Adrenal gland (tissue), 19 donors: ENCODE measurements at regions of chr4 and their contacts with region 1.

Region 1: DNA sequence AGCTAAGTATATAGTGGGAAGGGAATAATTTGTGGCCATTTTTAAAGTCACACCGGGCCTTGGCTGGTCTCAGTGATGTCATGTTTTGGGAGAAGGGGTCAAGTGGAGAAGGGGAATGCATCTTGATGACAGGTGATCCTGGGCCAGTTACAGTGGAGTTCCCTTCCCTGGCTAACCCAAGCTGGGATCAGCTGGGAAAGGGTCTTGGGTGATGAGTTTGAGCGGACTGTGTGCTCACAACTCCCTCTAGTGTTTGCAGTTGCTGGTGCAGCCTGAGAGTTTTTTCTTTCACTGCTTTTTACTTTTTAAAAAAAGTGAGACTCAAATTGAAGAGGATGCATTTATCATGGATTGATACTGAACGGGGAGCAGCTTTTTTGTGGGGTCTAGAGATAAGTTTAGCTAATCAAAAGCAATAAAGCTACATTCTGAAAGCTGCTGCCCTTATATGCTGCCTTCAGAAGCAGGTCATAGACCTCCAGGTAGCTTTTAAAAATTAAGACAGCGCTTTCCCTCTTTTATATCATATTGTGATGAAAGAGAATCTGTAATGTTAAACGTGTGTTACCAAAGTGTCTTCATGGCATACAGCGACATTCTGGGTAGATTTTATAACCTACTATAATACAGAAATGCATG is 164.7 kb downstream of the DCLK2 start:
- DNase-seq: peak in 4 of 7 donors; percentile 29 to 61 (median 49)
- H3K4me3 ChIP-seq: no peak overlapping the region
- H3K27ac ChIP-seq: no peak overlapping the region
- H3K4me1 ChIP-seq: no peaks in the 10 kb centered on the region
- H3K27me3 ChIP-seq: no peaks in the 10 kb centered on the region
- CTCF ChIP-seq: peak; percentile 60 to 92 (median 84)
- POLR2A ChIP-seq: no peak

Region 2: DNA sequence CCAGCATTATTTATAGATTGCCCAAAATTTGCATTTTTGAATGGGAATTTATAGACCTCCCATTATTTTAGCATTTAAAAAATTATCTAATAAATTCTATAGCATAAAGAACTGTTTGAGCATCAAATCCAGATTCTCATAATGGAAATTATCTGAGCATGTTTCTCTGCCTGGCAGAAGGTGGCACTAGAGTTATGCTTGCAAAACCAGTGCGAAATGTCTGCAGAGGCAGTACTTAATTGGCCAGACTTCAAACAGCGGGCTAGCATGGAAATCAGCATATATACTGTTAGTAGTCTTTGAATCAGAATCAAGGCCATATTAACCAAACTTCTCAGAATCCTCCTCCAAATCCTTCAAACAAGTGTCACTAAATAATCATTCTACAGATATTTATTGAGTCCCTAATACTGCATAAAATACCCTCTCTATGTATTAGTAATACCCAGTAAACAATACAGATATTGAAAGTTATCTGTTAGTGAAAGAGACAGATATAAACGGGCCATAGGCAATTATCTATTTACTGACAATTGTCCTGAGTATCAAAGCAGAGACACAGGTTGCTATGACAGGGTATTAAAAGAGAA is 243.4 kb before region 1 on chr4:
- intact Hi-C with region 1: loop called (anchors 10 kb)
- DNase-seq: peak in 6 of 7 donors; percentile 43 to 61 (median 46)
- H3K4me3 ChIP-seq: no peak overlapping the region
- H3K27ac ChIP-seq: no peak overlapping the region
- H3K4me1 ChIP-seq: peaks cover 0 to 3% of the 10 kb centered on the region in 2 donors
- H3K27me3 ChIP-seq: no peaks in the 10 kb centered on the region
- CTCF ChIP-seq: peak; percentile 42 to 82 (median 70)
- POLR2A ChIP-seq: no peak

Region 3: DNA sequence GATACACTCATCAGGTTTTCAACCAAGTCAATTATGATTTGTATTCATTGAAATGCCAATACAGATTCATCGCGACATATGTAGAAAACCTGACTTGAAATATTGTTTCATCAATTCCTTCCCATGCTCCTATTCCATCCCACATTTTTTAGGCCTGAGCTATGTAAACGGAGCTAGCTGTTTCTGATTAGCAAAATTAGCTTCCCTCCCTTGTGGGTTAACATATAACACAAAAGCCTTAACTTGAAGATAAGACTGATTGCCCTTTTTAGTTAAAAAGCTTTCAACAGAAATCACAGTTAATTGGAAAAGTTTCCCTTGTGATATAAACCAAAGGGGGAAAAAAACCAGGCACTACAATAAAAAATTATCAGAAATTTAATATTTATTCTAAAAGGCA is 197.5 kb before region 1 on chr4:
- intact Hi-C with region 1: no loop called
- DNase-seq: no peak
- H3K4me3 ChIP-seq: no peak overlapping the region
- H3K27ac ChIP-seq: no peak overlapping the region
- H3K4me1 ChIP-seq: no peaks in the 10 kb centered on the region
- H3K27me3 ChIP-seq: no peaks in the 10 kb centered on the region
- CTCF ChIP-seq: no peak
- POLR2A ChIP-seq: no peak